Naive thymus-derived CD4-positive, alpha-beta T cell (primary cell): ENCODE measurements at regions of chr14 and their contacts with region 1.

Region 1: DNA sequence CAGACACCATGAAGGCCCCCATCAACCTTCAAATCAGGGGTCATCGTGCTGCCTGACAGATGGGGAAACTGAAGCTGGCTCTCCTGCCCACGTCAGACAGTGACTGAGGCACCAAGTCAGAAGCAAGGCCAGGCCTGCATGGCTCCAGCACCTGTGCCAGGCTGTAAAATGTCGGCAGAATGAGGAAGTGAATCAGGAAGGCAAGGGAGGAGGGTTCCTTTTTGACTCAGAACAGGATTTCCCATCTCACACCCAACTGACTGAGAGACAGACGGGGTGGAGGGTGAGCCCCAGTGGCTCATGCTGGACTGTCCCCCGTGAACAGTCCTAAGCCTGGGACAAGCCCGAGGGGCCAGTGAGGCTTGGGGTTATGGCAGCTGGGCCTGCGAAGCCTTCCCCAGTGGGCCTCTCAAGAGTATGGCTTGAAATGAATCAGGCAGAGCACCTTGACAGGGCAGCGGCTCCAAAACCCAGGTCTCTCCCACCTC is 20.9 kb downstream of the SYNE3 start:
- DNase-seq: no peak
- ATAC-seq: peak; percentile 81
- H3K4me3 ChIP-seq: peak overlapping the region; percentile 5
- H3K4me3 Mint-ChIP-seq: peak overlapping the region in 7 of 10 donors; percentile 33 to 55 (median 46)
- H3K27ac ChIP-seq: peak overlapping the region; percentile 39
- H3K27ac Mint-ChIP-seq: peak overlapping the region; percentile 72 to 90 (median 84)
- H3K4me1 ChIP-seq: peaks cover 18 to 22% of the 10 kb centered on the region in 2 donors
- H3K4me1 Mint-ChIP-seq: peaks cover 54 to 72% (median 66%) of the 10 kb centered on the region in 7 donors
- H3K27me3 ChIP-seq: no peaks in the 10 kb centered on the region
- H3K27me3 Mint-ChIP-seq: no peaks in the 10 kb centered on the region

Region 2: DNA sequence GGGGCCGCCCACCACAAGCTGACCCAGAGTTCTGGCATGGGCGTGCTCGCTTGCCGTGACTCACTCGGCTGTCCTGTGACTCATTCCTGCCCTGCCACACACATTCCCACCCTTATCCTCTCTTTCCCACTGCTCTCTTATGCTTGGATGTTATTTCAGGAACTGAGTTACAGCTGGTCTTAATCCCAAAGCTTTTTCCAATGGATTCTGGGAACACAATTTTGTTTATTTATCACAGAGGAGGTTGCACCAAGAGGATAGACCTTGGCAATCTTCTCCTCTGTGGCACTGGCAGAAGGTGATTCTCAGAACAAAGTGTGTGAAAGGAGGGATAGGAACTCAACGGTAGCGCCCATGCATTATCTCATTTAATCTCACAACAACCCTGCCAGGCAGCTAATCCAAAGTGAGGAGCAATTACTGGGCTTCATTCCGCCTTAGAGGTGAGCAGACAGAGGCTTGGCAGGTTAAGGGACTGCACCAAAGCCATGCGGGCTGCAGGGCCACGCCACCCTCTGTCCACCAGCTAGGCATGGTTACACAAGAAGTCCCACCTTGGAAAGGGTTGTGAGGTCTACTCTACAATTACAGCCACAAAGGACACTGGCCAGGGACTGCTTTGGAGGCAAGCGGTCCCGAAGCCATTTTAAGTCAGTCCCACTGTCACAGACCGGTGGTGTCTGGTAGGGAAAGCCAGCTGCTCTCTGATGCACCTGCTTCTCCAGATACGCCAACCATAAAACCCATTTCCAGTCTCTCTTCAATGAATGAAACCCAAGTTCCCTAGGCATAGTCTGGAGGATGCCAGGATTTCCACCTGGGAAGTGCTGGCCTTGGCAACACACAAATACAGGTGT is 12.0 kb before region 1 on chr14:
- CTCF ChIA-PET with region 1: interaction called, 3 read pairs
- POLR2A ChIA-PET with region 1: interaction called, 3 read pairs
- intact Hi-C with region 1: loop called in 1 of 2 experiments (anchors 2 kb)
- DNase-seq: no peak
- ATAC-seq: no peak
- H3K4me3 ChIP-seq: no peak overlapping the region
- H3K4me3 Mint-ChIP-seq: no peak overlapping the region
- H3K27ac ChIP-seq: no peak overlapping the region
- H3K27ac Mint-ChIP-seq: peak overlapping the region; percentile 3 to 79 (median 60)
- H3K4me1 ChIP-seq: peaks cover under 1 to 19% of the 10 kb centered on the region in 2 donors
- H3K4me1 Mint-ChIP-seq: peaks cover 47 to 63% (median 55%) of the 10 kb centered on the region in 7 donors
- H3K27me3 ChIP-seq: no peaks in the 10 kb centered on the region
- H3K27me3 Mint-ChIP-seq: no peaks in the 10 kb centered on the region